ENCODE measurements at regions of chr16 and their contacts with region 1.

Region 1: DNA sequence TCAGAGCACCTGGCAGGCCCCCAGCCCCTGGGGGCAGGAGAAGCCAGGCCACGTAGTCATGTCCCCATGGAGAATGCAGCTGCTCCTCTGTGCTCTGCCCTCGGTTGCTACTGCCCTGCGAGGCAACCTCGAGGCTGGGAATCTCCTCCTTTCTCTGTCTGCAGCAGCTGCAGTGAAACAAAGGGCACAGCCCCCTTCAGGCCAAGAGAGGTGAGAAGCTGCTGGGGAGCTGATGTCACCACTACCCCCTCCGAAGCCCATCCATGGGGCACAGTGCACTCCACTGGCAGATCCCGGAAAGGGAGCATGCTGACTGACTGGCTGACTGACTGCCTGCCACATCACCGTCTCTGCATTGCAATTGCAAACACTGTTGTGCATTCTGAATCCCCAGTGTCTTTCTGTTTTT is 103.7 kb downstream of the GRIN2A start:
- DNase-seq: no peak
- H3K4me3 ChIP-seq: no peak overlapping the region
- H3K27ac ChIP-seq: no peak overlapping the region
- H3K4me1 ChIP-seq: peaks cover 0 to 11% (median 6%) of the 10 kb centered on the region in 4 donors
- H3K27me3 ChIP-seq: no peaks in the 10 kb centered on the region
- CTCF ChIP-seq: no peak
- EP300 ChIP-seq: no peak
- POLR2A ChIP-seq: no peak

Region 2: GRCh38 chr16:10013364-10013763 is 65.2 kb before region 1 on chr16:
- in situ Hi-C with region 1: no loop called
- intact Hi-C with region 1: no loop called
- DNase-seq: no peak
- H3K4me3 ChIP-seq: no peak overlapping the region
- H3K27ac ChIP-seq: no peak overlapping the region
- H3K4me1 ChIP-seq: no peaks in the 10 kb centered on the region
- H3K27me3 ChIP-seq: peaks cover 4% of the 10 kb centered on the region
- CTCF ChIP-seq: no peak
- EP300 ChIP-seq: no peak
- POLR2A ChIP-seq: no peak

Region 3: GRCh38 chr16:10130538-10130937 is 52.0 kb after region 1 on chr16:
- in situ Hi-C with region 1: no loop called
- intact Hi-C with region 1: loop called (anchors 10 kb)
- DNase-seq: no peak
- H3K4me3 ChIP-seq: no peak overlapping the region
- H3K27ac ChIP-seq: peak overlapping the region in 1 of 4 donors; percentile 12
- H3K4me1 ChIP-seq: no peaks in the 10 kb centered on the region
- H3K27me3 ChIP-seq: no peaks in the 10 kb centered on the region
- CTCF ChIP-seq: no peak
- EP300 ChIP-seq: no peak
- POLR2A ChIP-seq: no peak

Measured in transverse colon (tissue), 4 donors.